SK-N-SH (cell line): ENCODE measurements at regions of chr9 and their contacts with region 1.

Region 1: GRCh38 chr9:122477346-122477745 is 380 bp downstream of the OR1J1 start:
- DNase-seq: no peak
- H3K4me3 ChIP-seq: no peak overlapping the region
- H3K27ac ChIP-seq: no peak overlapping the region
- H3K4me1 ChIP-seq: no peaks in the 10 kb centered on the region
- H3K27me3 ChIP-seq: no peaks in the 10 kb centered on the region
- CTCF ChIP-seq: no peak
- EP300 ChIP-seq: no peak
- RAD21 ChIP-seq: no peak

Region 2: DNA sequence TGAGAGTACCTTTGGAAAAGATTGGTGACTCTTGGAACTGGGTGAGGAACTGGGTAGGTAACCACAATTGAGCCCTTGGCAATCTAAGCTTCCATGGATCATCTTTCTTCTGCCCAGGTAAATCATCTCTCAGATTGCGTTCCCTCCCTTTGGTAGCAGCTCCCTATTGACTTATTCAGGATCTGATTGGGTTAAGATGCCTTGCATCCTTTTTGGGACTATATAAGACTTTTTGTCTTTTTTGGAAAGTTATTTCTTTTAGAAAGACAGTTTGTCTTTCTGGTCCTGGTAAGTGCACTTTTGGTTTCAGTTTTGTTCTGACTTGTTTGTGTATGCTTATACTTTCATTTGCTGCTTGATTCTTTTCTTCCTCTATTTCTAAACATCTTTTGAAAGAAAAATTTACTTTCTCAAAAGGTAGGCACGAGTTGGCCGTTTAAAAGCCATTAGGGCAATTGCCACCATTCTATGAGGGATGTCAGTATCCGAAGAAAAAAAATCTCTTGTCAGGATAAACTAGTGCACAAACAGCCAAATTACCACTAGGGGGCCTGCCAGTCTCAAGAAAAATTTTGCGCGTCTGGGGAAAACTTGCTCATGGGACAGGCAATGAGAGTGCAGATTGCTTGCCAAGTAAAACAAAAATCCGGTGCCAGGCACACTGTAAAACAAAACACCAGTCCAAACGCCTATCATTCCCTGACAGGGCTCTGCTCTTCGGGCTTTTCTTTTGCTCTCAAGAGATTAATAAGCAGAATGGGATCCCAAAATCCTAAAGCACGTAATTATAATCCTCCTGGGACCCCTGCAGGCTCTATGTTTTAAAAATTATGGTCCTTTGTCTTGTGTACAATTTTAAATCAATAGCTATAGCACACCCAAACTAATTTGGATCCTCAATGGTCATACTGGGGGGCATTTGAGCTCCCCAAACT is 12.4 kb before region 1 on chr9:
- CTCF ChIA-PET with region 1: interaction called, 32 read pairs
- POLR2A ChIA-PET with region 1: no interaction called
- DNase-seq: peak; percentile 52
- H3K4me3 ChIP-seq: peak overlapping the region; percentile 47 to 60
- H3K27ac ChIP-seq: peak overlapping the region in 1 of 2 experiments; percentile 7; a peak in 1 of 4 replicates
- H3K4me1 ChIP-seq: peaks cover 3 to 4% of the 10 kb centered on the region in 2 experiments; a peak in 2 of 4 replicates
- H3K27me3 ChIP-seq: no peaks in the 10 kb centered on the region
- CTCF ChIP-seq: peak; percentile 92
- EP300 ChIP-seq: 0 out of 4 replicates have a peak, but pooled peaks of 1 of the 2 experiments have one; percentile 9
- RAD21 ChIP-seq: peak; percentile 85